BJ (cell line): ENCODE measurements at regions of chr7 and their contacts with region 1.

Region 1: DNA sequence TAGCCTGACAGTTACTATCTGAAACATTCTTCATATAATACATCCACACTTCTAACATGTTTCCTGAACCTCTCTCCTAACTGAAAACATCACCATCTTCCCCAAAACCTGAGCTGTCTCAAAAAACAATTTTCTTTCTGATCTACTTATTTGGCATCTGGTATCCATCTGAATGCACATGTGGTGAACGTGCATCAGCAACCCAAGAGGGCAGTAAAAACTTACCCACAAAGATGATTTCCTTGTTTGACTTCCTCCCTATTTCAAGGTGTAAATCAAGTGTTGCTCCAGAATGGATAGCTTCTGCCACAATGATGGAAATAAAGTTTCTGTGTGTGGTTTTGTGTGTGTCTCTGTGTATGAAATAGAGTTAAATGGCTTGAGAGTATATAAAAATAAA is 500.4 kb downstream of the MAGI2 start:
- DNase-seq: peak; percentile 25
- H3K4me3 ChIP-seq: no peak overlapping the region
- H3K27me3 ChIP-seq: no peaks in the 10 kb centered on the region
- CTCF ChIP-seq: no peak

Region 2: GRCh38 chr7:78702770-78703169 is 250.3 kb before region 1 on chr7:
- CTCF ChIA-PET with region 1: no interaction called
- POLR2A ChIA-PET with region 1: no interaction called
- DNase-seq: peak; percentile 95
- H3K4me3 ChIP-seq: no peak overlapping the region
- H3K27me3 ChIP-seq: no peaks in the 10 kb centered on the region
- CTCF ChIP-seq: no peak

Region 3: DNA sequence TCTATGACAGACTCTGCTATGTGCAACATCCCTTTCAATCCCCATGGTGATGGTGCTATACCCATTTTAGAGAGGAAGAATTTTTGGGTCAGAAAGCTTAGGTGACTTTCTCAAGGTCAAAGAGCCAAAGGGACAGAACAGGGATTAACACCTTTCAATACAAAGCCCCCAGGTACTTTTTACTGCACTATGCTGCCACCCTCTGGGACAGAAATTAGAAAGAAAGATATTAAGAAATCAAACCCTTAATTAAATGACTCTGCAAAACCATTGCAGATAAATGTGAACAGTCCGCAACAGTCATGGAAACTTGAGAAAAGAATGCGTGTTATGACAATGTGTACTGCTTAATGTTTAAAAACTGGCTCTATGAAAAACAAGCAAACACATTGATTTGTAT is 173.3 kb before region 1 on chr7:
- CTCF ChIA-PET with region 1: no interaction called
- POLR2A ChIA-PET with region 1: no interaction called
- DNase-seq: no peak
- H3K4me3 ChIP-seq: no peak overlapping the region
- H3K27me3 ChIP-seq: no peaks in the 10 kb centered on the region
- CTCF ChIP-seq: no peak

Region 4: GRCh38 chr7:79352323-79352722 is 399.2 kb after region 1 on chr7:
- CTCF ChIA-PET with region 1: no interaction called
- POLR2A ChIA-PET with region 1: no interaction called
- DNase-seq: no peak
- H3K4me3 ChIP-seq: no peak overlapping the region
- H3K27me3 ChIP-seq: no peaks in the 10 kb centered on the region
- CTCF ChIP-seq: no peak

Region 5: DNA sequence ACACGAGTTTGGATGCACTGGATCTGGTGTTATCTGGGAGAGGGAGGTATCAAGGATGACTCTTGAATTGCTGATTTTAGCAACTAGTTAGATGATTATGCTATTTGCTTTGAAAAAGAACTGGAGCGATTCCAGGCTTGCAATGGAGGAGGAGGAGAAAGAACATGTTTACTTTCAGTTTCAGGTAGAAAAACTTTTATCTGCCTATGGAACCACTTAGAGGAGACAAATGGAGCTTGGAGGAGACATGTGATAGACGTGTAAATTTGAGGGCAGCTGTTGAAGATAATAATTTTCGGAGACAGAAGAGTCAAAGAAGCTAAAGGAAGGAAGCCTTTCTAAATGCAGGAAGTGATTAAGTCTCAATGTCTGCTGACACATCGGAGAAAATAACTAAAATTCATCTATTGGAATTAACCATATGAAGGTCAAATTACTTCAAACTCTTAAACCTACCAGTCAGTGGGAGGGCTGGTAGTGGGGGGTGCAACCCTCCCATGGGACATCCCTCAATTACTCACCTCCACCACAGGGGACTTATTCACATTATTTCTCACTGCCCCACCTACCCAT is 1125.2 kb after region 1 on chr7:
- CTCF ChIA-PET with region 1: no interaction called
- POLR2A ChIA-PET with region 1: interaction called, 11 read pairs
- DNase-seq: no peak
- H3K4me3 ChIP-seq: no peak overlapping the region
- H3K27me3 ChIP-seq: no peaks in the 10 kb centered on the region
- CTCF ChIP-seq: no peak